ENCODE measurements at regions of chr20 and their contacts with region 1.

Region 1: GRCh38 chr20:58650776-58651558 is at the start of gene STX16:
- DNase-seq: peak; percentile 76 to 95 (median 86)
- ATAC-seq: peak; percentile 63
- H3K4me3 ChIP-seq: peak within 1 kb of the TSS; percentile 86 to 96
- H3K4me3 Mint-ChIP-seq: peak within 1 kb of the TSS; percentile 99
- H3K27ac ChIP-seq: peak within 1 kb of the TSS; percentile 87 to 92
- H3K27ac Mint-ChIP-seq: peak within 1 kb of the TSS; percentile 99
- H3K4me1 ChIP-seq: peaks cover 30% of the 10 kb centered on the region
- H3K4me1 Mint-ChIP-seq: peaks cover 27% of the 10 kb centered on the region
- H3K27me3 ChIP-seq: no peaks in the 10 kb centered on the region
- H3K27me3 Mint-ChIP-seq: no peaks in the 10 kb centered on the region
- CTCF ChIP-seq: peak; percentile 88
- total RNA-seq, gene STX16: 161 to 177 TPM

Region 2: DNA sequence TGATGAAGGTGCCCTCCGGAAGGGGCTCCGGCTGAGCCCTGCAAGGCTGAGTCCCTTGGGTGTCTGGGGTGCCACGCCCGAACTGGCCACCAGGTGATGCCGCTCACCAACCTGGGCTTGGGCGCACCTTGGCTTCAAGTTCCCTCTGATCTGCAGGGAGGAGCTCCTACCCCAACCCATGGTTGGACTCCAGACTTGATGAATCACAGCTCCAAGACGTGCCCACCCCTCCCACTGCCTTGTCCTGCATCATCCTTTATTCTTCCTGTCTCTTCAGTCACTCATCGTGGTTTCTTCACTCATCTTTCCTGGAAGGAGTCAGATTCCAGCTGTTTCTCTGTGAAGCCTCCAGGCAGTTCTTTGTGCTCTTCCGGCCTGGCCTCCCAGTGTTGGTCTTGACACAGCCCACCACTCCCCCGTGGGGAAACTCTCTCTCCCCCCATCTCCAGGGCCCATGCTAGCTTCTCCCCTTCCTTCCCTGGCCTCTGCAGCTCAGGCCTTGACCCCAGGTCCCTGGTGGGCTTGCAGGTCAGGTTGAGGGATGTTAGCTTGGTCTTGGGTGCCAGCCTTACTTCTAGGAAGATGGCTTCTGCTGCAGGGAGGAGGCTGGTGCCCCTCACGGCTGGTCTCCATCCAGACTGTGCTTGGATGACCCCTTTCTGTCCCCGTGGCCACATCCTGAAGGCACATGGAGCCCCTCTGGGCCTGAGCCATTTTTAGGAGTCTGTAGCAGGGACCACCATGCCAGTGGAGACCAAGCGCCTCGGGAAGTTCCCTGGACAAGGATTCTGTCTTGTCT is 1028.2 kb before region 1 on chr20:
- CTCF ChIA-PET with region 1: no interaction called
- POLR2A ChIA-PET with region 1: interaction called, 3 read pairs
- intact Hi-C with region 1: loop called (anchors 5 kb)
- DNase-seq: peak; percentile 52 to 80 (median 76)
- ATAC-seq: peak; percentile 34
- H3K4me3 ChIP-seq: no peak overlapping the region
- H3K4me3 Mint-ChIP-seq: peak overlapping the region; percentile 57
- H3K27ac ChIP-seq: no peak overlapping the region
- H3K27ac Mint-ChIP-seq: peak overlapping the region; percentile 84
- H3K4me1 ChIP-seq: peaks cover 73% of the 10 kb centered on the region
- H3K4me1 Mint-ChIP-seq: peaks cover 78% of the 10 kb centered on the region
- H3K27me3 ChIP-seq: no peaks in the 10 kb centered on the region
- H3K27me3 Mint-ChIP-seq: no peaks in the 10 kb centered on the region
- CTCF ChIP-seq: peak; percentile 72

Region 3: DNA sequence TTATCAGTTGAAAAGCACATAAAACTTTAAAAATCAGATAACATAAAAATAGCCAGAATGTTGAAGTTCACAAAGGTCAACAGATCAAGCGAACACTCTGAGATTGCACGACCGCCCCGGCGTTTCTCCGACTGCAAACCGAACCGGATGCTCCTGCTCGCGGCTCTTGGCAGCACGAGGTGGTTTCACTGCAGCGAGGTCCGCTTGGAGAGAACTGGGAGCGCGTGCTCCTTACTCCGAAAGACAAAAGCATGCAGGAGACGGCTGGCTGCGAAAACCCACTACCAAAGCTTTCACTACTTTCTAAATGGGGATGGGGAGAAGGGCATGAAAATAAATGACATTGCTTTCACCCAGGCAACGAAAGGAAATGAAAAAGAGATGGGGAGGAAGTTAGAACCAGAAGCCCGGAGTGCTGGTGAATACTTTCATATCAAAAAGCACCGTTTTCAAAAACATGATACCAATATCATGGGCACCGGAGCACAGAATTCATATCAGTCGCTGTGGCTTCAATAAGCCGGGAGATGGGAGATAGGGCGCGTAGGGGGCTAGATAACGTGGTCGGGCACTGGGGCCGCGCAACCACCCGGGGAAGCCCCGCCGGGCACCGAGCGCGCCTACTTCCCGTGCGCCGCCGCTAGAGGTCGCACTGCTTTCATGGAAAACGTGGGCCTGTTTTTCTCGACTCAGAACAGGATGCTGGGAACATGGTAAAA is 414.2 kb before region 1 on chr20:
- CTCF ChIA-PET with region 1: interaction called, 16 read pairs
- POLR2A ChIA-PET with region 1: interaction called, 3 read pairs
- intact Hi-C with region 1: loop called (anchors 1 to 2 kb)
- DNase-seq: peak; percentile 70 to 91 (median 82)
- ATAC-seq: peak; percentile 87
- H3K4me3 ChIP-seq: peak overlapping the region; percentile 53 to 85
- H3K4me3 Mint-ChIP-seq: peak overlapping the region; percentile 86
- H3K27ac ChIP-seq: peak overlapping the region; percentile 56 to 73
- H3K27ac Mint-ChIP-seq: peak overlapping the region; percentile 89
- H3K4me1 ChIP-seq: peaks cover 7% of the 10 kb centered on the region
- H3K4me1 Mint-ChIP-seq: peaks cover 19% of the 10 kb centered on the region
- H3K27me3 ChIP-seq: no peaks in the 10 kb centered on the region
- H3K27me3 Mint-ChIP-seq: no peaks in the 10 kb centered on the region
- CTCF ChIP-seq: peak; percentile 96

Region 4: GRCh38 chr20:58598211-58599014 is 52.6 kb before region 1 on chr20:
- CTCF ChIA-PET with region 1: no interaction called
- POLR2A ChIA-PET with region 1: no interaction called
- intact Hi-C with region 1: no loop called
- DNase-seq: no peak
- ATAC-seq: no peak
- H3K4me3 ChIP-seq: no peak overlapping the region
- H3K4me3 Mint-ChIP-seq: no peak overlapping the region
- H3K27ac ChIP-seq: no peak overlapping the region
- H3K27ac Mint-ChIP-seq: no peak overlapping the region
- H3K4me1 ChIP-seq: no peaks in the 10 kb centered on the region
- H3K4me1 Mint-ChIP-seq: no peaks in the 10 kb centered on the region
- H3K27me3 ChIP-seq: no peaks in the 10 kb centered on the region
- H3K27me3 Mint-ChIP-seq: peaks cover 9% of the 10 kb centered on the region
- CTCF ChIP-seq: no peak

Region 5: DNA sequence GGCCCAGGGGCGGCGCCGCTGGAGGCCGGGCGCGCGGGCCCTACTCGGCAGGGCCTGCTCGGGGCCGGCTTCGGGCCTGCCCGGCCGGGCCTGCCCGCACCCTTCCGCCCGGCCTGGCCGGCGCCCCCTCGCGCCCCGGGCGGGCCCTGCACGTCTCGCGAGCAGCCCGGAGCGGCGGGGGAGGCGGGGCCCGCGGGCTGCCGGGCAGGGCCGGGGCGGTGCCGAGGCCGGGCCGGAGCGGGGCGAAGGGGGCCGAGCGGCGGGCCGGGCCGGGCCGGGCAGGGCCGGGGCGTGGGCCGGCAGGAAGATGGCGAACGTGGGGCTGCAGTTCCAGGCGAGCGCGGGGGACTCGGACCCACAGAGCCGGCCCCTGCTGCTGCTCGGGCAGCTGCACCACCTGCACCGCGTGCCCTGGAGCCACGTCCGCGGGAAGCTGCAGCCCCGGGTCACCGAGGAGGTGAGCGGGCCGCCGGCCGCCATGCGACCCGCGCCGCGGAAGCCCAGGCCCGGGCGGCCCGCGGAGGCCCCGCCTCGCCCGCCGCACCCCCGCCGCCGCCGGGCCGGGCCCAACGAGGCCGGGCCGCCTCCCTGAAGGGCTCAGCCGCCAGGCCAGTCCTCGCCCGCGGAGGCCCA is 41.7 kb after region 1 on chr20 and contains the start of gene NPEPL1:
- CTCF ChIA-PET with region 1: interaction called, 15 read pairs
- POLR2A ChIA-PET with region 1: interaction called, 32 read pairs
- intact Hi-C with region 1: loop called (anchors 1 kb)
- DNase-seq: peak in 8 of 9 experiments; percentile 49 to 85 (median 63)
- ATAC-seq: peak; percentile 93
- H3K4me3 ChIP-seq: peak within 1 kb of the TSS; percentile 11 to 40
- H3K4me3 Mint-ChIP-seq: peak within 1 kb of the TSS; percentile 65
- H3K27ac ChIP-seq: peak within 1 kb of the TSS; percentile 23 to 73
- H3K27ac Mint-ChIP-seq: peak within 1 kb of the TSS; percentile 89
- H3K4me1 ChIP-seq: peaks cover 20% of the 10 kb centered on the region
- H3K4me1 Mint-ChIP-seq: peaks cover 12% of the 10 kb centered on the region
- H3K27me3 ChIP-seq: no peaks in the 10 kb centered on the region
- H3K27me3 Mint-ChIP-seq: no peaks in the 10 kb centered on the region
- CTCF ChIP-seq: no peak
- total RNA-seq, gene NPEPL1: 46.9 to 58.3 TPM

Region 6: GRCh38 chr20:58721951-58722778 is 71.2 kb after region 1 on chr20:
- CTCF ChIA-PET with region 1: no interaction called
- POLR2A ChIA-PET with region 1: no interaction called
- intact Hi-C with region 1: no loop called
- DNase-seq: peak in 1 of 9 experiments; percentile 37
- ATAC-seq: no peak
- H3K4me3 ChIP-seq: no peak overlapping the region
- H3K4me3 Mint-ChIP-seq: no peak overlapping the region
- H3K27ac ChIP-seq: no peak overlapping the region
- H3K27ac Mint-ChIP-seq: no peak overlapping the region
- H3K4me1 ChIP-seq: no peaks in the 10 kb centered on the region
- H3K4me1 Mint-ChIP-seq: no peaks in the 10 kb centered on the region
- H3K27me3 ChIP-seq: peaks cover 0 to 4% of the 10 kb centered on the region in 2 experiments
- H3K27me3 Mint-ChIP-seq: peaks cover 36% of the 10 kb centered on the region
- CTCF ChIP-seq: no peak

Region 7: GRCh38 chr20:58790454-58790853 is 139.5 kb after region 1 on chr20:
- CTCF ChIA-PET with region 1: no interaction called
- POLR2A ChIA-PET with region 1: no interaction called
- intact Hi-C with region 1: no loop called
- DNase-seq: peak in 1 of 9 experiments; percentile 7
- ATAC-seq: no peak
- H3K4me3 ChIP-seq: no peak overlapping the region
- H3K4me3 Mint-ChIP-seq: no peak overlapping the region
- H3K27ac ChIP-seq: no peak overlapping the region
- H3K27ac Mint-ChIP-seq: no peak overlapping the region
- H3K4me1 ChIP-seq: no peaks in the 10 kb centered on the region
- H3K4me1 Mint-ChIP-seq: no peaks in the 10 kb centered on the region
- H3K27me3 ChIP-seq: no peaks in the 10 kb centered on the region
- H3K27me3 Mint-ChIP-seq: peaks cover 6% of the 10 kb centered on the region
- CTCF ChIP-seq: no peak

Region 8: DNA sequence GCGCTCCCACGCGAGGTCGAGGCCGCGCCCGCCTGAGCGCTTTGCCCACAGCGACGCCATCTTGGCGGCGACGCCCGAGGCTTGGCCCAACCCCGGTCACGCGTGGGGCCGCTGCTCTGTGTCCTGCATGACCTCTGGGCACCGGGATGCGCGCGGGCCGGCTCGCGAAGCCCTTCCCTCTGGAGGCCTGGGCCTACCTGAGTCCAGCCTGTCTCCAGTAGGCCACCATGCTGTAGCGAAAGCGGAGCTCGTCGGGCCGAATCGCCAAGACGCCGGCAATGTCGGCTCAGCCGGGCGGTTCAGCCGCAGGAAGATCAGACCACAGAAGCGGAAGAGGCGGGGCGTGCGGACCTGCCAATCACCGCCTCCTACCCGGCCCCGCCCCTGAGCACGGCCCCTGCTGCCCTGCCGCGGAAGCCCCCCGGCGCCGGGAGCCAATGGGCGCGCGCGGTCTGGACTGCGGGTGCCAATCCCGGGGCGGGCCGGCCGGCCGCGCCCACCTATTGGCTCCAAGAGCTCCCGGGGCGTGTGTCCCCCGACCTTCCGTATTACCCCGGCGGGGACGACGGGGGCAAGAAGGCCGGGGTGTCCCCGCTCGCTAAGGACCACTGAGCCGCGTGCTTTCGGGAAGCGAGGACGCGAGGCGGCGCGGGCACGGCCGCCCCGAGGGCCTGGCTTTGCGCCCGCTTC is 381.2 kb after region 1 on chr20 and contains the start of gene ATP5F1E:
- CTCF ChIA-PET with region 1: interaction called, 3 read pairs
- POLR2A ChIA-PET with region 1: interaction called, 3 read pairs
- intact Hi-C with region 1: loop called (anchors 1 to 2 kb)
- DNase-seq: peak; percentile 95 to 99 (median 98)
- ATAC-seq: peak; percentile 97
- H3K4me3 ChIP-seq: peak within 1 kb of the TSS; percentile 75 to 89
- H3K4me3 Mint-ChIP-seq: peak within 1 kb of the TSS; percentile 95
- H3K27ac ChIP-seq: peak within 1 kb of the TSS; percentile 67 to 79
- H3K27ac Mint-ChIP-seq: peak within 1 kb of the TSS; percentile 95
- H3K4me1 ChIP-seq: peaks cover 56% of the 10 kb centered on the region
- H3K4me1 Mint-ChIP-seq: peaks cover 60% of the 10 kb centered on the region
- H3K27me3 ChIP-seq: no peaks in the 10 kb centered on the region
- H3K27me3 Mint-ChIP-seq: no peaks in the 10 kb centered on the region
- CTCF ChIP-seq: no peak
- total RNA-seq, gene ATP5F1E: 50.4 to 52.2 TPM

Region 9: GRCh38 chr20:59403261-59403961 is 752.4 kb after region 1 on chr20:
- CTCF ChIA-PET with region 1: no interaction called
- POLR2A ChIA-PET with region 1: no interaction called
- intact Hi-C with region 1: loop called in 1 of 2 experiments (anchors 1 kb)
- DNase-seq: peak; percentile 57 to 91 (median 73)
- ATAC-seq: peak; percentile 84
- H3K4me3 ChIP-seq: peak overlapping the region; percentile 10 to 47
- H3K4me3 Mint-ChIP-seq: no peak overlapping the region
- H3K27ac ChIP-seq: peak overlapping the region in 1 of 2 experiments; percentile 21
- H3K27ac Mint-ChIP-seq: peak overlapping the region; percentile 81
- H3K4me1 ChIP-seq: peaks cover 38% of the 10 kb centered on the region
- H3K4me1 Mint-ChIP-seq: peaks cover 4% of the 10 kb centered on the region
- H3K27me3 ChIP-seq: peaks cover 7 to 13% of the 10 kb centered on the region in 2 experiments
- H3K27me3 Mint-ChIP-seq: peaks cover 8% of the 10 kb centered on the region
- CTCF ChIP-seq: peak; percentile 99